IMR-90 (cell line): ENCODE measurements at regions of chr11 and their contacts with region 1.

Region 1: DNA sequence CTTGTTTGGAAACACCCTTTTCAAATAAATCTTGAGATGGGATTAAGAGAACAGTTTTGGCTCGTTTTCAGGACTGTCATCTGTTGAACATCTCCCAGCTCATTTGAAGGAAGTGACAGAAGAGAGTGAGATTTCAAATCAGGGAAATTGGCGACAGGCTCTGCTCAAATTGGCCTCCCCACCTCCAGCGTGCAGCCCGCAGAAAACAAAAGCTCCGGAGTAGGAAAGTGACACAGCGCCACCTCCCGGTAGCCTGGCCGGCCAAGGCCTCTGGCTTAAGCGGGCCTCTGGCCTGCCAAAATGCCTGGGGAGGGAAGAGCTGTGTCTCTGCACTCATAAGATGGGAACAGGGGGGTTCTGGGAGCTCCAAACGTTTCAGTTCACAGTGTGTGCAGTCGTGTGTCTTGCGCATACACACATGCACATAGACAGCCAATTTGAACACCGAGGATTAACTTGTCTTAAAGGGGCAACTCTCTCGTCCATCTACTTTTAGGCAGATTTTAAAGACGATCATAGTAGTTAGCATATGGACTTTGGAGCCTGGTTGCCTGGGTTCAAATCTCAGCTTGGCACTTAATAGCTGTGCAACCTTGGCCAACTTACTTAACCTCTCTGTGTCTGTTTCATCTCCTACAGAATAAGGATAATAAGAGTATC is 132.7 kb upstream of the RCN1 start:
- DNase-seq: peak; percentile 29
- ATAC-seq: peak; percentile 84
- H3K4me3 ChIP-seq: no peak overlapping the region
- H3K27ac ChIP-seq: no peak overlapping the region
- H3K4me1 ChIP-seq: no peaks in the 10 kb centered on the region
- H3K27me3 ChIP-seq: peaks cover 5% of the 10 kb centered on the region
- CTCF ChIP-seq: peak; percentile 63
- POLR2A ChIP-seq: no peak
- RAD21 ChIP-seq: peak; percentile 61

Region 2: DNA sequence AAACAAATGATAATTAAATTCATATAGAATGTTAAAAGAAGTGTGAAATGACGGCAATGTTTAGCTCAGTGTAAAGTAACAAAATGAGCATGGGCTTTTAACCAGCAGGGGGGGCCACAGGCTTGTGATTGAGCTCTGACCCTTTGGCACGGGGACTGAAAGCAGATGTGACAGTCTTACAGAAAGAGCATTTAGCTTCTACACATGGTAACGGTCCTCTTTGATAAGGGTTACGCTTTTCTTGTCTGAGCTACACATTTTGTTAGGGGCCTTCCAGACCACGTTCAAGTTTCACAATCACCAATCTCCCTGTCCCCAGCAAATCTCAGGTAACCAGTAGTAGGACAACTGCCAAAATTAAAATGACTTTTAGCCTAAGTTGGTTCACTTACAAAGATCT is 851.1 kb before region 1 on chr11:
- CTCF ChIA-PET with region 1: no interaction called
- POLR2A ChIA-PET with region 1: no interaction called
- dilution Hi-C with region 1: no loop called
- in situ Hi-C with region 1: no loop called
- intact Hi-C with region 1: loop called (anchors 5 kb)
- DNase-seq: peak; percentile 7
- ATAC-seq: peak; percentile 46; the same call in 1 of the 2 replicates
- H3K4me3 ChIP-seq: no peak overlapping the region
- H3K27ac ChIP-seq: no peak overlapping the region
- H3K4me1 ChIP-seq: no peaks in the 10 kb centered on the region
- H3K27me3 ChIP-seq: no peaks in the 10 kb centered on the region
- CTCF ChIP-seq: peak; percentile 49
- POLR2A ChIP-seq: no peak
- RAD21 ChIP-seq: peak; percentile 58

Region 3: DNA sequence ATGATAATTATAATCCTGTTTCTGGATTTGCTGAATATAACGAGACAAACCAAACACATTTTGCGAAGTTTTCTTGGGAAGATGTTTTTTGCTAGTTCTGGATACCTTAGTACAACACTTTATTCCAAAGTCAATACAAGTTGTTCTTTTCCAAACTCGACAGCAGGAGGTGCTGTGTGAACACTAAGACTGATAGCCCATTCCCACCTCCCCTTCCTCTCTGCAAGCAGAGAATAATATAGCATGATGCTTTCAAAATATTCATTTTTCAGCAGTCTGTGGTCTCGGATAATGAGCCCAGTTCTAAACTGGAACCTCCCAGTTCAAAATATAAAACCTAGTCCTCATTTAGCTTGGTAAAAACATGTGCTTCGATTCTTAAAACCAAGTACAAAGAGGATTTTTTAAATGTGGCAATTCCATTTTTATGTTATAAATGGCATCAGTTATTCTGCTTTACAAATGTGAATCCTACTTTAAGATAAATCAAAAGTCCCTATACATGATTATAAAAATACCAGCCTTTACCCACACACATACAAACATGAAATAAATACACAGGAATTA is 717.8 kb before region 1 on chr11:
- CTCF ChIA-PET with region 1: no interaction called
- POLR2A ChIA-PET with region 1: no interaction called
- dilution Hi-C with region 1: no loop called
- in situ Hi-C with region 1: no loop called
- intact Hi-C with region 1: loop called (anchors 1 kb)
- DNase-seq: peak; percentile 33
- ATAC-seq: no peak; the same call in 1 of the 2 replicates
- H3K4me3 ChIP-seq: no peak overlapping the region
- H3K27ac ChIP-seq: no peak overlapping the region
- H3K4me1 ChIP-seq: no peaks in the 10 kb centered on the region
- H3K27me3 ChIP-seq: no peaks in the 10 kb centered on the region
- CTCF ChIP-seq: peak; percentile 45
- POLR2A ChIP-seq: no peak
- RAD21 ChIP-seq: peak; percentile 43; the same call in 1 of the 2 replicates

Region 4: DNA sequence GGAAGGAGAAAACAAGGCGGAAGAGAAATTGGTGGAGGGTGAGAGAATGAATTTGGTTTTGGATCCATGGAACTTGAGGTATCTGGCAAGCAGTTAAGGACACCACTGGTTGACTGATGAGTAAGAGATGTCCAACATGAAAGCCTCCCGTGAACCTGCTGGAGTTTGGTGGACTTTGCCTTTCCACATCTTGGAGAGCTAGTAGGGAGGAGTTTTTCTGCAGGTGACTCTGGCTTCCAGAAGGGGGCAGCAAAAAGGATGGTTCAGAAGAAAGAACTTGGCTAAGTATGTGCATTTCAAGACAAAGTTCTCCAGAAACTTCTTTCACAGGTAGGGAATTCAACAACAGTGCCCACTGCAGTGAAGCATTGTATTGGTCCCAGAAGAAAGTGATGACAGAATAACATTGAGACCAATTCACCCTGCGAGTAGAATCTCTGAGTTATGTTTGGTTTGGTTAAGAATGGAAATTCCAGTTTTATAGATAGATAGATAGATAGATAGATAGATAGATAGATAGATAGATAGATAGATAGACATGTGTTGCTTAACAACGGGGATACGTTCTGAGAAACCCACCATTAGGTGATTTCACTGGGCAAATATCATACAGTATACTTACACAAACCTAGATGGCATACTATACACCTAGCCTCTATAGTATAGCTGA is 617.2 kb before region 1 on chr11:
- CTCF ChIA-PET with region 1: no interaction called
- POLR2A ChIA-PET with region 1: no interaction called
- dilution Hi-C with region 1: no loop called
- in situ Hi-C with region 1: no loop called
- intact Hi-C with region 1: loop called (anchors 1 kb)
- DNase-seq: peak; percentile 41
- ATAC-seq: peak; percentile 46; the same call in 1 of the 2 replicates
- H3K4me3 ChIP-seq: no peak overlapping the region
- H3K27ac ChIP-seq: no peak overlapping the region
- H3K4me1 ChIP-seq: no peaks in the 10 kb centered on the region
- H3K27me3 ChIP-seq: no peaks in the 10 kb centered on the region
- CTCF ChIP-seq: peak; percentile 55
- POLR2A ChIP-seq: no peak
- RAD21 ChIP-seq: peak; percentile 45

Region 5: DNA sequence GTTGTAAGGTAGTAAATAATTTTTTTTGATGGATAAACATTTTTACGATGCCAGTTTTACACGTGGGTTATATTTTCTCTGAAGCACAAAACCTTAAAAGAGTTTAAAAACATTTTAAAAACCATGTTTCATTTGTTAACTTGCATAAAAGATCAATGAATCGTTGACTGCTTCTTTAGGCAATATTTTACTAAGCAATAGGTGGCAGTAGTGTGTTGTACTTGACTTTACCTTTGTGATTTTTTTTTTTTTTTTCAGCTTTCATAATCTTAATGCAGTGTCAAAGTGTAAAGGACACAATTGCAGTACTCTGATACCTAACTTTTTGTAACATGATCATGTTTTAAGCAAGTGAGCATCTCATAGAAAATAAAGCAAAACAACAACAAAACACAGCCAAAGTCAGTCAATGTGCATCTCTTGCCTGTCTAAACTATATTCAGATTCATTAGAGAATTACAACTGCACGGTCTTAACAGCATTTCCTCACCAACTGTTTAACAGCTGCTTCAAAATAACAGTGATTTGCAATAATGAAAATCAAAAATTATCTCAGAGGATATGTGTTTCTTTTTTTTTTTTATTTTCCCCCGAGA is 560.9 kb before region 1 on chr11:
- CTCF ChIA-PET with region 1: interaction called, 3 read pairs
- POLR2A ChIA-PET with region 1: no interaction called
- dilution Hi-C with region 1: no loop called
- in situ Hi-C with region 1: no loop called
- intact Hi-C with region 1: loop called (anchors 2 kb)
- DNase-seq: peak; percentile 22
- ATAC-seq: peak; percentile 54; the same call in 1 of the 2 replicates
- H3K4me3 ChIP-seq: no peak overlapping the region
- H3K27ac ChIP-seq: no peak overlapping the region
- H3K4me1 ChIP-seq: no peaks in the 10 kb centered on the region
- H3K27me3 ChIP-seq: no peaks in the 10 kb centered on the region
- CTCF ChIP-seq: peak; percentile 74
- POLR2A ChIP-seq: no peak
- RAD21 ChIP-seq: peak; percentile 77

Region 6: GRCh38 chr11:31487848-31488247 is 470.4 kb before region 1 on chr11:
- CTCF ChIA-PET with region 1: interaction called, 3 read pairs
- POLR2A ChIA-PET with region 1: no interaction called
- dilution Hi-C with region 1: no loop called
- in situ Hi-C with region 1: no loop called
- intact Hi-C with region 1: loop called (anchors 1 kb)
- DNase-seq: peak; percentile 73
- ATAC-seq: peak; percentile 82
- H3K4me3 ChIP-seq: no peak overlapping the region
- H3K27ac ChIP-seq: no peak overlapping the region
- H3K4me1 ChIP-seq: no peaks in the 10 kb centered on the region
- H3K27me3 ChIP-seq: no peaks in the 10 kb centered on the region
- CTCF ChIP-seq: peak; percentile 60
- POLR2A ChIP-seq: no peak
- RAD21 ChIP-seq: peak; percentile 63

Region 7: GRCh38 chr11:31770011-31770700 is 188.1 kb before region 1 on chr11:
- CTCF ChIA-PET with region 1: no interaction called
- POLR2A ChIA-PET with region 1: no interaction called
- dilution Hi-C with region 1: no loop called
- in situ Hi-C with region 1: no loop called
- intact Hi-C with region 1: no loop called
- DNase-seq: peak; percentile 3
- ATAC-seq: no peak
- H3K4me3 ChIP-seq: no peak overlapping the region
- H3K27ac ChIP-seq: no peak overlapping the region
- H3K4me1 ChIP-seq: no peaks in the 10 kb centered on the region
- H3K27me3 ChIP-seq: no peaks in the 10 kb centered on the region
- CTCF ChIP-seq: no peak
- POLR2A ChIP-seq: no peak
- RAD21 ChIP-seq: no peak

Region 8: DNA sequence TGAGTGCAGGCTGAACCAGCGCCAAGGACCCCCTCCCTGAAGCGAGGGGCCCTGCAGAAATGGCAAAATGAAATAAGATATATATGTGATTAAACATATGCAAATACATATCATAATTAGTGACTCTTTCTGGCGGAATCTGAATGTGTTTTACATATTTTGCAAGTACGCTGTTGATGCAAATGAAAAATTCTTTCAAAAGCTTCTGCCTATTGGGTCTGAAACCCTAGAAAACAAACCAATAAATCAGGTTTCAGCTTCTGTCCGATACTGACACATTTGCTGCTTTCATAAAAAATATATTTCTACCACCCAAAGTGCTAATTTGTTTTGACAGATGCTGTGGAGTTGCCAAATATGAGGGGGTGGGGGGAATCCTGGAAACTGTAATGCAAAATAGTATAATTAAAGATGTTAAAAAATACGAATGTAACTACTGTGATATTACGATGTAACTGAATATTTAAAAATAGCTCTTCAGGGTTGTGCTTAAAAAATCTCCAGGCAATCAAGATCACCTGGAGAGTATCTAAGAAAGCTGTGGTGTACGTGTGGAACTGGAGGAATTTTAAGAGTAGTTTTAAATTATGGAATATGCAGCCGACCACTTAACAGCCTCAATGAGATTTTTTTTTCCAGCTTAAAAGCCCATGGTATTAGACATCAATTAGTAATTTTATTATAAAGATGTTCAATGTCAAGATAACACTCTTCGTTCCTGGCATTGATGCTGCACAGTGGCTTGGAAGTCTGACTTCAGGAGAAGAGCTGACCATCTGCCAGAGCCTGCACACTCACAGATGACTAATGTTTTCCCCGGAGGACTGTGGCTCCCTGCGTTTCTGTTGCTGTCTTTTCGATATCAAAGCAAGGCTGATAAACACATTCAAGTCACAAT is 10.5 kb after region 1 on chr11:
- CTCF ChIA-PET with region 1: interaction called, 11 read pairs
- POLR2A ChIA-PET with region 1: no interaction called
- dilution Hi-C with region 1: no loop called
- in situ Hi-C with region 1: no loop called
- intact Hi-C with region 1: no loop called
- DNase-seq: peak; percentile 61
- ATAC-seq: peak; percentile 76
- H3K4me3 ChIP-seq: no peak overlapping the region; the same call in 1 of the 2 replicates
- H3K27ac ChIP-seq: no peak overlapping the region
- H3K4me1 ChIP-seq: no peaks in the 10 kb centered on the region; the same call in 1 of the 2 replicates
- H3K27me3 ChIP-seq: peaks cover 27% of the 10 kb centered on the region
- CTCF ChIP-seq: no peak
- POLR2A ChIP-seq: no peak
- RAD21 ChIP-seq: no peak